Activated T-helper 2 cell treated with anti-CD3 and anti-CD28 coated beads, Interferon-gamma antibody, Interleukin-2, Interleukin-4, amounts not matched to agents 10 μg/mL and 5 μg/mL and 100 μg/mL, durations not matched to agents 14 hours and 24 hours and 36 hours (primary cell): ENCODE measurements at regions of chr12 and their contacts with region 1.

Region 1: DNA sequence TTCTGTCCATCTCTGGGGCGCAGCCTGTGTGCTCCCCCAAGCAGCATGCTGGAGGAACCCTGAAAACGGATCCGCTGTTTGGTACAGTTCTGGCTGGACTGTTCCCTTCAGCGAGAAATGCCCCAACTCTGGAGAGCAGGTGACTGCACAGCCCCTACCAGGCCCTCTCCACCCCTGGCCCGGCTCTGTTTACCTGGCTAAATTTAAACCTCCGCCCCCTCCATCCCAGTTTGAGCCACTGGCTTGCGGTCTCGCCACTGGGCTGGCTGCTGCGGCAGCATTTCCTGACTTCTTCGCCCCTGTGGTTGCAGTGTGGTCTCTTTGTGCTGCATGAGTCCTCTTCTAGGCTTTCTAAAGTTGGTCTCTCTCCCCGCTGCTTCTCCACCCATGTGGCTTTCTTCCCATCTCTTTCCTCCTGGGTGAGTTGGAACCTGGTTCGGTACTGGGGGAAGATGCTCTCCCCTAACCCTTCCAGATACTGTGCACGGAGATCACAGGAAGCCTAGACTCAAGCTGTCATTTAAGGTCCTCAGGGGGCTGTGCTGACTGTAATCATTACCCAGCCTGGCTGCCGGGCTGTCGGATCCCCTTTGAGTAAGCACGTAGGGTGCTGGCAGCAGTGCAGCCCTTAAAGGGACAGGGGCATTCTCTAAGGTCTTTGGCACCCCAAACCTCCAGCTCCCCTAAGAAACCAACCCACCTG is 60.6 kb downstream of the FBXL14 start:
- DNase-seq: peak; percentile 54
- H3K4me3 Mint-ChIP-seq: peak overlapping the region; percentile 60
- H3K27ac Mint-ChIP-seq: peak overlapping the region; percentile 23
- H3K4me1 Mint-ChIP-seq: peaks cover 28% of the 10 kb centered on the region
- H3K27me3 Mint-ChIP-seq: peaks cover 60% of the 10 kb centered on the region

Region 2: DNA sequence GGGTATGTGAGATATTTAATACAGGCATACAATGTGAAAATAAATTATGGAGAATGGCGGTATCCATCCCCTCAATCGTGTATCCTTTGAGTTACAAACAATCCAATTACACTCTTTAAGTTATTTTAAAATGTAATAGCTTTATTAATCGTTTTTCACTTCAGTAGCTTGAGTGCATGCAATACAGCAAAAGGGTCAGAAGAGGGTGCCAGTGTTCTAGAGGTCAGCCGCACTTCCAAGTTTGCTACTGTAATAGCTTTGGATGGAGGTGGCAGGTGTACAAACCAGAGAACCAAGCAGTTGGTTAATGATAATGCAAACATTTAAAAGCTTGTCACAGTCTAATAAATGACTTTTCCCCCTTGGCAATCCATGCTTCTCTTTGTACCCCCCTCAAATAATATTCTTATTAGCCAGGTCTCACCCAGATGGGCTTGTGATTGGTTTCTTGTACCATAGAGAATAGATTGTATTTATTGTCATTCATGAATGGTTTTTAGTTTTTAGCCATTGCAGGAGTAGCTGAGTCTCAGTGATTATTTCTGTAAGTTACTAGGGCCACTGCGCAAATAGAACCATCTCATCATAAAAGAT is 415.7 kb before region 1 on chr12:
- intact Hi-C with region 1: loop called (anchors 5 kb)
- DNase-seq: peak; percentile 57
- H3K4me3 Mint-ChIP-seq: no peak overlapping the region
- H3K27ac Mint-ChIP-seq: no peak overlapping the region
- H3K4me1 Mint-ChIP-seq: peaks cover 14% of the 10 kb centered on the region
- H3K27me3 Mint-ChIP-seq: no peaks in the 10 kb centered on the region

Region 3: DNA sequence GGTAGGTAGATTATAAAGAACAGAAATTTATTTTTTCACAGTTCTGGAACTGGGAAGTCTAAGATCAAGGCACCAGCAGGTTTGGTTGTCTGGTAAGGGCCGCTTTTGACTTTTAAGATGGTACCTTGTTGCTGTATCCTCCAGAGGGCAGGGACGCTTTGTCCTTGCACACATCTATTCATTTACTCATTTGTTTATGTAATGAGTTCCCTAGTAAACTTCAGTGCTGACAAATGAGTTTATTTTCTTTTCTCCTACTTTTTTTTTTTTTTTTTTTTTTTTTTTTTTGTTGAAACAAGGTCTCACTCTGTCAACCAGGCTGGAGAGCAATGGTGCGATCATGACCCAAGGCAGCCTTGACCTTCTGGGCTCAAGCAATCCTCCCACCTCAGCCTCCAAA is 135.1 kb before region 1 on chr12:
- intact Hi-C with region 1: no loop called
- DNase-seq: no peak
- H3K4me3 Mint-ChIP-seq: no peak overlapping the region
- H3K27ac Mint-ChIP-seq: no peak overlapping the region
- H3K4me1 Mint-ChIP-seq: no peaks in the 10 kb centered on the region
- H3K27me3 Mint-ChIP-seq: no peaks in the 10 kb centered on the region

Region 4: DNA sequence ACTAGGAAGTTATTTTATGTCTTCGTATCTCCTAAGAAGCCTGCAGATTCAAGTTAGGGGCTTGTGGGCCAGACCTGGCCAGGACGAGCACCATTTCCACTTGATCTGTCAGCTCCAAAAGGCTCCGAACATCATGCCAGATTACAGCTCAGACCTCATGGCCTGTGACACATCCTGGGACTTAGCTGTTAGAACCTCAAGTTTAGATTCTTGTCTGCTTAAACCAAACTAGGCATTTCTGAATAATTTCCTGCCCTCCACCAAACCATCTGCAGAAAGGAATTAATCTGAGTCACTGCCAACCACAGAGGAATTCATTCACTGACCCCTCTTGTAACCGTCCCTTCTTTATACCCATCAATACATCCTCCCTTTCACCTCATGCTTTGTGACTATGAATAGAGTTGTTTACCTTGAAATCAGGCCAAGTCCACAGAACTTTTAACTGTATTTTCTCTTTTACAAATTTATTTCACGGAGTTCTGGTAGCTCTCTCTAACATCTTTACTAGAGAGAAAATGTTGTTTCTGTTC is 59.6 kb before region 1 on chr12:
- intact Hi-C with region 1: loop called (anchors 2 kb)
- DNase-seq: peak; percentile 21
- H3K4me3 Mint-ChIP-seq: no peak overlapping the region
- H3K27ac Mint-ChIP-seq: no peak overlapping the region
- H3K4me1 Mint-ChIP-seq: peaks cover 10% of the 10 kb centered on the region
- H3K27me3 Mint-ChIP-seq: no peaks in the 10 kb centered on the region

Region 5: DNA sequence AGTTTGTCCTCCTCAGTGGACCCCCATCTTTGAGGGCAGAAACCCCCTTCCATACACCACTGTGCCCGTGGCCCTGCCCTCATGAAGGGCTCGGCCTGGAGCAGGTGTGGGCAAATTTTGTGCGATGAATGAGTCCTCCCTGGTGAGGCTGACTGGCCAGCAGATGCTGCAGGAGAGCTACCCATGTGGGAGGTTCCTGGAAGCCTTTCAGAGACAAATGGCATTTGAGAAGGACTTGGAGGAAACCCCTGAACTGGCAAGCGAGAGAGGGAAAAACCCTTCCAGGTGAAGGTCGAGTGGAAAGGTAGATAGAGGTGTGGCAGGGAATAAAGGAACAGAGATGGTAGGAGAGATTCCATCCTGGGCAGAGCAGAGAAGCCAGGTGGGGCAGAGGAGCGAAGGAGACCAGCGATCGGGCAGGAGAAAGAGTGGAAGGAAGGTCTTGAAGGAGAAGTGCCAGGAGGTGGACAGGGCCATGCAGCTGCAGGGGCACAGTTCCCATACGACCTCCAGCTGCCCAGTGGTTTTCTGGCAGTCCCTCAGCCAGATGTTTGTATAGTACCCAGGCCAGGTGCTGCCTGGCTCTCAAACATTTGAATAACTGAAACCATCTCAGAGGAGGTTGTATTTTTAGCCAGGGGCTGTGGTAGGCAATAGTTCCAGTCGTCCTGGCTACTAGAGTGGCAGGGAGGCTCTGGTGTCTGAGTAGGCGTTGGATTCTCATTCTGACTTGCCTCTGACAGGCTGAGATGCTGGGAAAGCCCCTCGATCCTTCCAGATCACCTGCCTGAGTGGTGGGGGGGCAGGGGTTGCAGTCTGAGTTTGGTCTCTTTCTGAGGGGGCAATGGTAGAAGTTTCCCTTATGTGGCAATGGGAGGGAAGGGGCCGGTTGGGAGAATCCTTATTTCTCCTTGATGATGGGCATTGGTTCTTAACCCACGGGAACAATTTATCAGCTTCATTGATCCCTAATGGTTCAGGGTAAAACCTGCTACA is 20.5 kb after region 1 on chr12:
- intact Hi-C with region 1: loop called (anchors 1 kb)
- DNase-seq: no peak
- H3K4me3 Mint-ChIP-seq: no peak overlapping the region
- H3K27ac Mint-ChIP-seq: no peak overlapping the region
- H3K4me1 Mint-ChIP-seq: peaks cover 10% of the 10 kb centered on the region
- H3K27me3 Mint-ChIP-seq: peaks cover 5% of the 10 kb centered on the region